Posterior cingulate gyrus (tissue), 11 donors: ENCODE measurements at regions of chr5 and their contacts with region 1.

Region 1: DNA sequence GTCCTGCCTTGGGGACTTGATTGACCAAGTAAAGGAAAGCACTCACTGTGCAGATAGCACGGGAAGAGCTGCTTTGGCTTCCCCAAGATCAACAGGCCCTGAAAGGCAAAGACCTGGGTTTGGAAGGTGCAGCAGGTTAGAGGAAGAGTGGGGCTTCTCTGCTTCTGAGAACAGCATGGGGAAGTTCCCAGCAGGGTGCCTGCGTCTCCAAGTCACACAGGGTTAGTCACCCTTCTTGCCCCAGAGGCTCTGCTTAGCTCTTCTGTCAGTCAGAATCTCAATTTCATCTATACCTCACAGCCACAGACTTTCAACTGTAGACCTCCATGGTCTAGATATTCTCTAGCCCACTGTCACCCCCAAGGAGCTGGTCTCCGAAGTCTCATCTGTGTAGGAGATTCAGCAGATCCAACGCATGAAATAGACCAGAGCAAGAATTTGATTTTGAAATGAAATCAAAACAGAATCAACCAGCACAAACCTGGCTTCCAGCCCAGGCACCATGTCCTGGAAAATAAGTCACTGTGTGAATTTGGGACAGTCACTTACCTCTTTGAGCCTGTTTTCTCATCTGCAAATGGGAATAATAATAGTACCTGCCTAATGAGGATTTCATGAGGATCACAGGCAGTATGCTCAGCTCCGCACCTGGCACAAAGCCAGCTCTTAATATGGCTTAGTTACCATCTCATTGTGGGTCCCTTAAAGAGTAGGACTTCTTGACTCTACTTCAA is 64.0 kb downstream of the SFXN1 start:
- DNase-seq: no peak

Region 2: GRCh38 chr5:175464074-175464941 is 78.1 kb before region 1 on chr5:
- intact Hi-C with region 1: no loop called
- DNase-seq: peak in 6 of 10 donors; percentile 24 to 81 (median 60)

Region 3: DNA sequence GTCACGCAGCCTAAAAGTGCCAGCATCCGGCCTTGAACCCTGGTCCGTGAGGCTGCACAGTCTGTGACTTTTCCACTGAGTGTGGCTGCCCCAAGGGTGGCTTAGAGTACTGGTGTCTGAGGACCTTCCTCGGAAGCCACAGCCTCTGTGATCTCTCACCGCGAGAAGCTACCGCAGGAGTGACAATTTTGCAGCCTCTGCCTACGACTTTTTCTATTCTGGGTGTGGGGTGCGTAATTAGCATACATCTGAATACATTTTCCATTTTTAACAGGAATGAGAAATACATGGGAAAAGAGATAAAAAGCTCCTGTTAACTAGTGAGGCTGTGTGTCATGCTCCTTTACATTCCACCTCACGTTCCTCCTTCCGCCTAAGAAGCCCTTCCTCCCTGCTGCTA is 67.1 kb after region 1 on chr5:
- intact Hi-C with region 1: loop called (anchors 10 kb)
- DNase-seq: peak in 4 of 10 donors; percentile 25 to 77 (median 26)

Region 4: DNA sequence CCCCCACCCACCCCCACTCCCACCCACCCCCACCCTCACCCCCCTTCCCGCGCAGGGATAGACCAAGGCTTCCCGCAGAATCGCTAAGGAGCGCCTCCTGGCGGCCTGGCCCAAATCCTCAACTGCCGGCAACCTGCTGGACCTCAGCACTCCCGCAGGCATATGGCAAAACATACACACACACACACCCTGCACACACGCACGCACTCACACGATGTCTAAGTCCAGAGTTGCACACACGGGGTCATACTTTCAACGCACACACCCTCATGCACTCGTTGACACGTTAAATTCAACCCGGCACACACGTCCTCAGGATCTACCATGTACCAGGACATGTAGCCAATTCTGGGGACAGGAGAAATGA is 330.7 kb after region 1 on chr5:
- intact Hi-C with region 1: loop called (anchors 5 kb)
- DNase-seq: peak in 9 of 10 donors; percentile 41 to 96 (median 75)